ENCODE measurements at regions of chr5 and their contacts with region 1.

Region 1: GRCh38 chr5:32709781-32710549 is 1.2 kb upstream of the NPR3 start:
- DNase-seq: peak; percentile 91
- H3K4me3 ChIP-seq: peak overlapping the region; percentile 90
- H3K27ac ChIP-seq: peak overlapping the region; percentile 86
- H3K4me1 ChIP-seq: peaks cover 10% of the 10 kb centered on the region
- H3K27me3 ChIP-seq: no peaks in the 10 kb centered on the region

Region 2: DNA sequence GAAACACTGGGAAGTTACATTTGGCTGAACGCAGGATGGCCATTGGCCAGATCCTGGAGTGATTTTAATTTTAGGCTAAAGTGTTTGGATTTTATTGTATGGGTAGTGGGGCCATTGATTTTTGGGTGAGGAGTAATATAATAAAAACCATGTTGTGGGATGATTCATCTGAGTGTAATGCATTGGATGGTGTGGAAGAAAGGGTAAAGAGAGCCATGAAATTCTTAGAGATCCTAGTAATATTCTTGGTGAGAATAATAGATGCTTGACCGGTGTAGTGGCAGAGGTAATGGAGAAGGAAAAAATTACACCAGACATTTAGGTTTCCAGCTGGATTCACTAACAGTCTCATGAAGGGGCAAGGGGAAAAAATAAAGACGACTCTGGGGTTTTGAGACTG is 159.3 kb after region 1 on chr5:
- in situ Hi-C with region 1: no loop called
- DNase-seq: peak; percentile 78
- H3K4me3 ChIP-seq: no peak overlapping the region
- H3K27ac ChIP-seq: no peak overlapping the region
- H3K4me1 ChIP-seq: peaks cover 25% of the 10 kb centered on the region
- H3K27me3 ChIP-seq: no peaks in the 10 kb centered on the region

Region 3: DNA sequence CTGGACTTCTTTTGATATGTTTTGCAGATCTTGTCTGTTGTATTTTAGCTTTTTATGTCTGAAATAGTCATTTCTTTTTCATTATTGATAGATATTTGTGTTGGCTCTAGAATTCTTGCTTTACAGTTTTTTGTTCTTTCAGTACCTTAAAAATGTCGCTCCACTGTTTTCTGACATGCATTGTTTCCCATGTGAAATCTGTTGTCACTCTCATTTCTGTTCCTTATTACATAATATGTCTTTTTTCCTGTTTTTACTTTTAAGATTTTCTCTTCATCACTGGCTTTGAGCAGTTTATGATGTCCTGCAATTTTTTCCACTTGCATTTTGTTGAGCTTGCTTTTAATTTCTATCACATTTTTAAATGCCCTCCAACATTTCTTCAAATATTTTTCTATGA is 460.4 kb after region 1 on chr5:
- in situ Hi-C with region 1: loop called (anchors 10 kb)
- DNase-seq: peak; percentile 31
- H3K4me3 ChIP-seq: no peak overlapping the region
- H3K27ac ChIP-seq: no peak overlapping the region
- H3K4me1 ChIP-seq: no peaks in the 10 kb centered on the region; the same call in 1 of the 2 replicates
- H3K27me3 ChIP-seq: no peaks in the 10 kb centered on the region

Measured in GM23248 (cell line).